Upper lobe of right lung (tissue), 1 donor: ENCODE measurements at regions of chr11 and their contacts with region 1.

Region 1: DNA sequence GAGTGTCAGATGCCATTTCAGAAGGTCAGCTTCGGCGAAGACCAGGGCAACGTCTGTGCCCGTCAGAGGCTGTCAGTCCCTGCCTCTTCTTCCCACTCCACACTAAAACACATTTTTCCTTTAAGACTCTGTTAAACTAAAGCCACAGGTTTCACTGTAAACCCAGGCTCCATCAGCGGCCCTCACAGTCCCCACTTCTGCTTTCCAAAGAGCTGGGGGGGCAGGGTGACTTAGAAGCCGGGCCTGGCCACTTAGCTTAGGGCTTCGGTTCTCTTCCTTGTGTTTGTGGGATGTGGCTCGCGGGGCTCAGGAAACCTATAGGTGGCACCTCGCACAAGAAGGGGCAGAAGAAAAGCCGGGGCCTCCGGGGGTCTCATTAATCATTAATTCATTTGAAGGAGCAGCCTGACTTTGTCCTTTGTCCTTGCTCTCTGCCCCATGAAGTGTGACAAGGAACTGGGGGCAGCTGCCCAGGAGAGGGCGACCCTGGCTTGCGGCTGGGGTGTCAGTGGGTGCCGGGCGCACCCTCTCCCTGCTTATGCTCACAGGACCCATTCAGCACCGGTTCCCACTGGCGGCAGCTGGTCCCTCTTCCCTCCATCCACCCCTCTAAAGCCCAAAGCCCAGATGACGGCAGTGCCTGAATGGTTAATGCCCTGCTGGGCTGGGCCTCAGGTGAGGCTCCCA is 4.1 kb downstream of the SLC25A45 start:
- DNase-seq: no peak
- ATAC-seq: no peak
- H3K4me3 ChIP-seq: no peak overlapping the region
- H3K27ac ChIP-seq: no peak overlapping the region
- H3K4me1 ChIP-seq: peaks cover 30% of the 10 kb centered on the region
- H3K27me3 ChIP-seq: no peaks in the 10 kb centered on the region
- CTCF ChIP-seq: no peak

Region 2: DNA sequence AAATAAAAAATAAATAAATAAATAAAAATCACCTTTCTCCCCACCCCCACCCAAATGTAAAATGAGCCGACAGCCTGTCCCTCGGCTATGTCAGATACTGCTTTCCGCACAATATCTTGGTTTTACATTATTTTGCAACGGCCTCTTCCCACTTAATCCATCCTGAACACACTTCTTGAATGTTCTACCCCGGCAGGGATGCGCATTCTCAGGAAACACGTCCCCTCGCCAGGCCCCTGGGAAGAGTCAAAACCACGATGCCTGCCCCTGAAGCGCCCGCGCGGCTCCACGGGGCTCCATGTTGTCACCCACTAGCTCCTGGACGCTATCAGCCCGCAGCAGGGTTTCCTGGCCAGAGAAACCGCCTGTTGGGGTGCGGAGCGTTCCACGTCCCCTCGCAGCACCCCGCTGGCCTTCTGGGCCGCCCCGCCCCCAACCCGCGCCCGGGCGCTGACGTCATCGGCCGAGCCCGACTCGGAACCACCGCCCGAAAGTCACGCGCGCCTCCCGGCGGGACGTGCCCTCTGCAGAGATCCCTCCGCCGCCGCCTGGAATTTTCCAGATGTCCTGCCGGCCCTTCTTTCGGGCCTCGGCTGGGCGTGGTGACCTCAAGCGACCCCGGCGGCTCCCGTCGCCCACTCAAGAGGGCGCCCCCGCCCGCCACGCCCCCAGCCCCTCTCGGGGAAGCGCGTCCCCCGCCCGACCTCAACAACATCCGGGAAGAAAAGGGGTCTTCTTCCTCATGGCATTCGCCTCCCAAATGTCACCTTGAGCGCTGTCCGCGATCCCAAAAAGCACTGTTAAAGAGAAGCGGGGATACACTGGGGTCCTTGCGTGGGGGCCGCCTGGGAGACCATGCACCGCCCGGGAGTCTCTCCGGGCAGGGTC is 43.7 kb after region 1 on chr11:
- intact Hi-C with region 1: no loop called
- DNase-seq: peak; percentile 100
- ATAC-seq: peak; percentile 42
- H3K4me3 ChIP-seq: peak overlapping the region; percentile 98
- H3K27ac ChIP-seq: peak overlapping the region; percentile 100
- H3K4me1 ChIP-seq: peaks cover 34% of the 10 kb centered on the region
- H3K27me3 ChIP-seq: no peaks in the 10 kb centered on the region
- CTCF ChIP-seq: peak; percentile 6

Region 3: DNA sequence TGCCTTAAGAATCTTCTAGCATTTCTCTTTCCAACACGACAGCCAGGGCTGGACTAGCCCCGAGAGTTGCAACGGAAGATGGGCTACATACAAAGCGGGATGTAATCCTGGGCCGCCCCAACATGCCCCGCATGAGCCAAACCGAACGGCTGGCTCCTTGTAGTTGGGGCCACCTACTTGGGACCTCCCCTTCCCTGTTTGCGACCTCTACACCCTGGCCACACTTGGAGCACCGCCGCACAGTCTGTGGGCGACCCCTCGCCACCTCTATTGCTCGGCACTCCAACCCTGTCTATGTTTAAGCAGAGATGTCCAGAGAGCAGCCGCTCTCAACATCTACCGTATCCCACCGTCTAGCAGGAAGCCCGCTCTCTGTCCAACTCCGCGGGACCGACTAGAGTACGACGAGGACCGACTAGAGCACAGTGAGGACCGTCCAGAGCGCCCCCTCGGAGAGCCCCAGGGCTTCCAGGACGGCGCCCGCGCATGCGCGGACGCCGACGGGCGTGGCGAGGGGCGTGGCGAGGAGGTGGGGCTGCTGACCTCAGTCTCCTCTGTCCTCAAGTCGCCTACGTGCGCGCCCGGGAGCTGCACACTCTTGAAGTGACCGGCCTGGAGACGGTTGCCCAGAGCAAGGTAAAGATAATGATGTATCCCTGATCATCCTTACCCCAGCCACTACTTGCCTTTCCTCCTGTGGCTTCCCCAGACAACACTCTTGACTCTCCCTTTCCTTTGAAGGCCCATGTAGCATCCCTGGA is 76.5 kb after region 1 on chr11:
- intact Hi-C with region 1: loop called (anchors 10 kb)
- DNase-seq: peak; percentile 95
- ATAC-seq: peak; percentile 97
- H3K4me3 ChIP-seq: peak overlapping the region; percentile 63
- H3K27ac ChIP-seq: peak overlapping the region; percentile 78
- H3K4me1 ChIP-seq: peaks cover 9% of the 10 kb centered on the region
- H3K27me3 ChIP-seq: no peaks in the 10 kb centered on the region
- CTCF ChIP-seq: no peak

Region 4: DNA sequence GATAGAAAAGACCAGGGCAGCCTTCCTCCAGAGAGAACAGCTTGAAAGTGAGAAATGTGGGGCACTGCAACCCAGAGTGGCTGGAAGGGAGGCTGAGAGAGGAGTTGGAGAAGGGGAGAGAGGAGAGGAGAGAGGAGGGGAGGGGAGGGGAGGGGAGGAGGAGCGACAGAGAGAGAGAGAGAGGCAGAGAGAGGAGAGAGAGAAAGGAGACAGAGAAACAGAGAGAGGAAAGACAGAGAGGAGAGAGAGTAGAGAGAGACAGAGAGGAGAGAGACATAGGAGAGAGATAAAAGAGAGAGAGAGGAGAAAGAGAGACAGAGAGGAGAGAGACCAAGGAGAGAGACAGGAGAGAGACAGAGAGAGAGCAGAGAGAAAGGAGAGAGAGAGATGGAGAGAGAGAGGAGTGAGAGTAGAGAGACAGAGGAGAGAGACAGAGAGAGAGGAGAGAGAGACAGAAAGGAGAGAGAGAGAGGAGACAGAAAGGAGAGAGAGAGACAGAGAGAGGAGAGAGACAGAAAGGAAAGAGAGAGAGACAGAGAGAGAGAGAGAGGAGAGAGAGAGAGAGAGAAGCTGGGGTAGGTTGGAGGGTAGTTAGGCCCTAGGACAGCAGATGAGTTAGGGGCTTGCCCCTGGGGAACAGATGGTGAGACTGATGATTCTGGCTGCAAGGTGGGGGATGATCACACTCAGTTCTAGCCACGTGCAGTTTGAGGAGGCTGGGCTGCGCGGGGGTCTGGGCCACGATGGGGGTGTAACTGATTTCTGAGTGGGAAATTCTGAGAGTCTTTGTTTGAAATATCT is 138.0 kb after region 1 on chr11:
- intact Hi-C with region 1: loop called (anchors 10 kb)
- DNase-seq: peak; percentile 28
- ATAC-seq: no peak
- H3K4me3 ChIP-seq: no peak overlapping the region
- H3K27ac ChIP-seq: no peak overlapping the region
- H3K4me1 ChIP-seq: no peaks in the 10 kb centered on the region
- H3K27me3 ChIP-seq: no peaks in the 10 kb centered on the region
- CTCF ChIP-seq: no peak